WTC11 (cell line): ENCODE measurements at regions of chr1 and their contacts with region 1.

Region 1: DNA sequence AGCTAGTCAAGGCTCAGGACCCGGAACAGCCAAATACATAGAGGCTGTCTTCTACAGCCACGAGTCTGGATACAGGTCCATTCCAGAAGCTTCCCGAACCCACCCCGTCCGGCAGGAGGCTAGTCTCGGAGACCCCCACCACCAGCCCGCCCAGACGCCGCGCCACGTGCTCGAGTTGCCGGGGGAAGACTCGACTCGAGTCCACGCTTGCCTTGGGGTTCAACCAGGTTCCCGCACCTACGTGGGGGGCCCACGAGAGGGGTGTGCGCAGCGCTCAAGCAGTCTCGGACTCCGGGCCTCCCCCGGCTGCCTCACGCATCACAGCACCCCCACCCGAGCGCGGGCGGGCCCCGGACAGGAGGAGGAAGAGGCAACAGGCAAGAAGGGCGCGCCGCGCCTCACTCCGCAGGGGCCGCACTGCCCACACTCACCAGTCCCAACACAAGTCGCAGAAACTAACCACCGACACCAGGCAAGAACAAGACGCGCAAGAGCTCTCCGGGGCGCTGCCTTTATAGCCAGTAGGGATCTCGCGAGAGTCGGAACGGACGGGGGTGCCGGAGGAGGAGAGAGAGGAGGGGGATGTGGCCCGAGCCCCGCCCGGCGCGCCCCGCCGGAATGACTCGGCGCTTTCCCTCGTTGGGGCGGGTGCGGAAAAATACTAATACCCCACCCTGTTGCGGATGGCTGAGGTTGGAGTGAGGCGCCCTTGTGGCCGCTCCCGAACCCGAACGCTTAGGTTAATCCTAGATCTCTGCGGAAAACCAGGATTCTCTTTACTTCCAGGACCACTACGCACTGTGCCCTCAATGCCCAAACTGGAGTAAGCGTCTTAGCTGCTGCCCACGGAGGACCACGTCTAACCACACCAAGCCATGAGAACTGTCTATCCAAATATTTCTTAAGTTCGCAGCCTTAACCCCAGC is at the start of gene PRDX1:
- DNase-seq: peak; percentile 98
- ATAC-seq: peak; percentile 89
- H3K4me3 Mint-ChIP-seq: peak within 1 kb of the TSS; percentile 95
- H3K27ac Mint-ChIP-seq: peak within 1 kb of the TSS; percentile 100
- H3K4me1 Mint-ChIP-seq: peaks cover 43% of the 10 kb centered on the region
- H3K27me3 Mint-ChIP-seq: no peaks in the 10 kb centered on the region
- CTCF ChIP-seq: no peak
- total RNA-seq, gene PRDX1: 1,102 to 1,197 TPM (median 1,130 TPM) in 3 replicates

Region 2: DNA sequence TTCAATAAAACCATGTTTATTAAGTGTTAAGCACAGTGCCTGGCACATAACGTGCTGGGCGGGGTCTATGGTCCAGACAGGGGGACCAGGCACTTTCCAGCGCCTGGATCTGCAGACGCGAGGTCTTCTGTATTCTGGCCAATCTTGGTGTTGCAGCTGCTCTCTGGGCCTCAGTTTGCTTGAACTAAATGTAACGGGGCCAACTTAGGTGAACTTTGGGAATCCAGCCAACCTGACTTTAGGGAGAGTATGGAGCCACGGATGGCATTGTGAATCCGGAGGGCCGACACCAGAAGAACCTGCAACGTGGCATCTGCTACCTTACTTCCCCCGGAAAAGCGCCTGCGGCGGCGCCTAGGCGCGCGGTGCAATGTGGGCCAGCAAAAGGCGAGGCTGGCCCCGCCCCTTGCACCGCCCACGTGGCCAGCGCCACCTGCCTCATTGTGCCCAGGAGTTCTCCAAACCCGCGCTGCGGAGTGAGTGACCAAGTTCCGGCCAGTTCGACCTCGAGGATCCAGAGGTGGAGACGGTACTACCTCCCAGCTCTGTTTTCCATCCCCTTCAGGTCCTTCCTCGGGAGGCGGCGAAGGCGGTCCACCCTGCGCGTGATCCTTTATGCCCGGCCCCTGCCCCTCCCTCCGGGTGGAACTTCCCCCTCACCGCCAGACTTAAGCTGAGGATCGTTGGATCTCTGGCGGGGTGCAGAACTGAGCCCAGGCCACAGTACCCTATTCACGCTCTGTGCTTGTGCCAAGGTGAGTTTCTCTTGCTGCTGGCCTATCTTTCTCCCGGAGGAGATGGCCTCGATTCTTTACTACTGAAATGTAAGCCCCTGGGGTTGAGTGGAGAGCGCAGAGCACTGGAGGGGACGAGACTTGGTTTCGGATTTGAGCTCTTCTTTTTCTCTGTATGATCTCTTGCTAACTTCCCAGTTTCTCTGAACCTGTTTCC is 29.0 kb after region 1 on chr1 and contains the start of gene AKR1A1:
- CTCF ChIA-PET with region 1: no interaction called
- POLR2A ChIA-PET with region 1: interaction called, 27 read pairs
- DNase-seq: peak; percentile 90
- ATAC-seq: peak; percentile 93
- H3K4me3 Mint-ChIP-seq: peak within 1 kb of the TSS; percentile 92
- H3K27ac Mint-ChIP-seq: peak within 1 kb of the TSS; percentile 86
- H3K4me1 Mint-ChIP-seq: peaks cover 13% of the 10 kb centered on the region
- H3K27me3 Mint-ChIP-seq: no peaks in the 10 kb centered on the region
- CTCF ChIP-seq: no peak
- total RNA-seq, gene AKR1A1: 338 to 380 TPM (median 371 TPM) in 3 replicates

Region 3: GRCh38 chr1:45557422-45557944 is 35.8 kb after region 1 on chr1:
- CTCF ChIA-PET with region 1: no interaction called
- POLR2A ChIA-PET with region 1: interaction called, 10 read pairs
- DNase-seq: no peak
- ATAC-seq: 0 out of 2 replicates have a peak, but pooled peaks have one; percentile 34
- H3K4me3 Mint-ChIP-seq: no peak overlapping the region
- H3K27ac Mint-ChIP-seq: peak overlapping the region; percentile 93
- H3K4me1 Mint-ChIP-seq: peaks cover 10% of the 10 kb centered on the region
- H3K27me3 Mint-ChIP-seq: no peaks in the 10 kb centered on the region
- CTCF ChIP-seq: no peak